Naive thymus-derived CD4-positive, alpha-beta T cell (primary cell): ENCODE measurements at regions of chr10 and their contacts with region 1.

Region 1: DNA sequence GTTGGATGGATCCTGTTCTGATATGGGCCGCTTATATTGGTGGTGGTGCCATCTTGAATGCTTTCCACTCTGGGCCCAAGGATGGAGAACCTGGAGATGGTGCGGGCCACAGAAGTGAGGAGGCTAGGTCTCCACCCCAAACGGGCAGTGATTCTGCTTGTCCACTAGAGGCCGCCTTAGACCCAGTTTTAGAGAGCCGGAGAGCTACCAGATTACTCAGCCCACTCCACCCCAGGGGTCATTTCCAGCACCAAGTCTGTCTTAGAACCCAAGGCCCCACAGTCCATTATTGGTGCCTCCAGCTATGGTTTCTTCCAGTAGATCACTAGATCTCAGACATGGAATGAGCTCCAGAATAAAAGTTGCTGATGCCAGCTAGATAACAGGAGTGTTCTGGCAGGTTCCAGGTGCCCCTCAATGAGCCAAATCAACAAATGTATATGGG is 11.8 kb upstream of the CAMK2G start:
- DNase-seq: peak; percentile 44 to 74 (median 69)
- ATAC-seq: peak; percentile 93
- H3K4me3 ChIP-seq: no peak overlapping the region
- H3K4me3 Mint-ChIP-seq: no peak overlapping the region
- H3K27ac ChIP-seq: no peak overlapping the region
- H3K27ac Mint-ChIP-seq: peak overlapping the region in 3 of 9 donors; percentile 39 to 60 (median 41)
- H3K4me1 ChIP-seq: no peaks in the 10 kb centered on the region
- H3K4me1 Mint-ChIP-seq: peaks cover 0 to 21% (median 0%) of the 10 kb centered on the region in 7 donors
- H3K27me3 ChIP-seq: no peaks in the 10 kb centered on the region
- H3K27me3 Mint-ChIP-seq: peaks cover 0 to 2% (median 0%) of the 10 kb centered on the region in 5 donors

Region 2: GRCh38 chr10:73848821-73849489 is 37.2 kb before region 1 on chr10:
- CTCF ChIA-PET with region 1: interaction called, 288 read pairs
- POLR2A ChIA-PET with region 1: interaction called, 327 read pairs
- intact Hi-C with region 1: no loop called
- DNase-seq: peak; percentile 82 to 93 (median 88)
- ATAC-seq: peak; percentile 100
- H3K4me3 ChIP-seq: no peak overlapping the region
- H3K4me3 Mint-ChIP-seq: peak overlapping the region in 5 of 10 donors; percentile 1 to 58 (median 37)
- H3K27ac ChIP-seq: peak overlapping the region; percentile 56
- H3K27ac Mint-ChIP-seq: peak overlapping the region; percentile 75 to 97 (median 94)
- H3K4me1 ChIP-seq: peaks cover 6 to 7% of the 10 kb centered on the region in 2 donors
- H3K4me1 Mint-ChIP-seq: peaks cover 11 to 23% (median 16%) of the 10 kb centered on the region in 7 donors
- H3K27me3 ChIP-seq: no peaks in the 10 kb centered on the region
- H3K27me3 Mint-ChIP-seq: no peaks in the 10 kb centered on the region

Region 3: GRCh38 chr10:73931767-73932619 is 45.9 kb after region 1 on chr10:
- CTCF ChIA-PET with region 1: interaction called, 301 read pairs
- POLR2A ChIA-PET with region 1: no interaction called
- intact Hi-C with region 1: no loop called
- DNase-seq: peak in 5 of 9 donors; percentile 10 to 55 (median 26)
- ATAC-seq: peak; percentile 75
- H3K4me3 ChIP-seq: no peak overlapping the region
- H3K4me3 Mint-ChIP-seq: peak overlapping the region in 1 of 10 donors; percentile 45
- H3K27ac ChIP-seq: no peak overlapping the region
- H3K27ac Mint-ChIP-seq: peak overlapping the region in 1 of 9 donors; percentile 85
- H3K4me1 ChIP-seq: no peaks in the 10 kb centered on the region
- H3K4me1 Mint-ChIP-seq: peaks cover 6 to 22% (median 11%) of the 10 kb centered on the region in 7 donors
- H3K27me3 ChIP-seq: no peaks in the 10 kb centered on the region
- H3K27me3 Mint-ChIP-seq: peaks cover 10 to 20% (median 14%) of the 10 kb centered on the region in 5 donors

Region 4: DNA sequence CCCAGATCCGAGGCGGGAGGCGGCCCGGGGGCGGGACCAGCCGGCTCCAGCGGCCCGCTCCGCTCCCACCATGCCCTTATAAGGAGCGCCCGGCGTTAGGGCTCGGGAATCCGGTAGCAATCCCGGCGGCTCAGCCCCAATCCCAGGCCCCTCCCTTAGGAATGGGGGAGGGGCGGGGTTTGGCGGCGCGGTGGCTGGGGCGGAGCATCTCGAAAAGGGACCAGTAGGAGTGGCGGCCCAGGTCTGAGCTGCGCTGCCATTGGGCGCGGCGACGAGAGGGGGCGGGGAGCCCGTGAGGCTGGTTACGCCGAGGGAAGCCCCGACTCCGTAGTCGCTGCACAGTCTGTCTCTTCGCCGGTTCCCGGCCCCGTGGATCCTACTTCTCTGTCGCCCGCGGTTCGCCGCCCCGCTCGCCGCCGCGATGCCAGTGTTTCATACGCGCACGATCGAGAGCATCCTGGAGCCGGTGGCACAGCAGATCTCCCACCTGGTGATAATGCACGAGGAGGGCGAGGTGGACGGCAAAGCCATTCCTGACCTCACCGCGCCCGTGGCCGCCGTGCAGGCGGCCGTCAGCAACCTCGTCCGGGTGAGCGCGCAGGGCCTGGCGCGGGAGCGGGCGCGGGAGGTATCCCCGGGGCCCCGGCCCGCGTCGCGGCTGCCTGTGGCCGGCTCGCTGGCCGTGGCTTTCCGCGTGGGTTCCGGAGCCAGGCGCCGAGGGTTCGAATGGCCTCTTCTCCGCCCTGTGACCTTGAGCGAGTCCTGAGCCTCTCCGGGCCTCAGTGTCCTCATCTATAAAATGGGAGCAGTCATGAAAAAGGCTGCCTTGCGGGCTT is 111.9 kb after region 1 on chr10 and contains the start of gene VCL:
- CTCF ChIA-PET with region 1: no interaction called
- POLR2A ChIA-PET with region 1: no interaction called
- intact Hi-C with region 1: loop called in 1 of 2 experiments (anchors 2 kb)
- DNase-seq: peak; percentile 90 to 97 (median 95)
- ATAC-seq: peak; percentile 99
- H3K4me3 ChIP-seq: peak within 1 kb of the TSS; percentile 71
- H3K4me3 Mint-ChIP-seq: peak within 1 kb of the TSS; percentile 83 to 100 (median 97)
- H3K27ac ChIP-seq: peak within 1 kb of the TSS; percentile 91
- H3K27ac Mint-ChIP-seq: peak within 1 kb of the TSS; percentile 83 to 99 (median 98)
- H3K4me1 ChIP-seq: peaks cover 19 to 22% of the 10 kb centered on the region in 2 donors
- H3K4me1 Mint-ChIP-seq: peaks cover 43 to 53% (median 48%) of the 10 kb centered on the region in 7 donors
- H3K27me3 ChIP-seq: no peaks in the 10 kb centered on the region
- H3K27me3 Mint-ChIP-seq: no peaks in the 10 kb centered on the region
- total RNA-seq, gene VCL: 9.0 to 67.7 (median 21.6) TPM

Region 5: DNA sequence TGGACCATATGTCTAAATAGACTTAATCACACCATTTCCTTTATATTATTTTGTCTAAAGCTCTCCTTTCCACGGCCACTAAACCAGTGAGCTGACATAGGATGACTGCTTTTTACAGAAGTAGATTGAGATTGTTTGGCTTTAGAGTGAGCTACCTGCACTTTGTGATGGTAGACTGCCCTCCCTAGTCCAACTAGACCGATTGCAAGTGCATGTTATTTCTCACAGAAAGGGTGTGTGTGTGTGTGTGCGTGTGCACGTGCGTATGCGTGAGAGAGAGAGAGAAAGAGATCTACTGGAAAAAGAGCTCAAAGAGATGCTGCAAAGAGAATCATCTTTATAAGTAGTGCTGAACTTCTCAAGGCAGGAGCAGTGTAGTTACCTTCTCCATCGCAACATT is 172.6 kb after region 1 on chr10:
- CTCF ChIA-PET with region 1: interaction called, 11 read pairs
- POLR2A ChIA-PET with region 1: interaction called, 3 read pairs
- intact Hi-C with region 1: loop called (anchors 1 kb)
- DNase-seq: peak in 7 of 9 donors; percentile 12 to 60 (median 29)
- ATAC-seq: peak; percentile 70
- H3K4me3 ChIP-seq: no peak overlapping the region
- H3K4me3 Mint-ChIP-seq: peak overlapping the region in 7 of 10 donors; percentile 1 to 76 (median 8)
- H3K27ac ChIP-seq: no peak overlapping the region
- H3K27ac Mint-ChIP-seq: peak overlapping the region in 5 of 9 donors; percentile 4 to 52 (median 12)
- H3K4me1 ChIP-seq: peaks cover 10 to 15% of the 10 kb centered on the region in 2 donors
- H3K4me1 Mint-ChIP-seq: peaks cover 18 to 44% (median 26%) of the 10 kb centered on the region in 7 donors
- H3K27me3 ChIP-seq: no peaks in the 10 kb centered on the region
- H3K27me3 Mint-ChIP-seq: no peaks in the 10 kb centered on the region

Region 6: GRCh38 chr10:74103560-74104248 is 217.6 kb after region 1 on chr10:
- CTCF ChIA-PET with region 1: interaction called, 3 read pairs
- POLR2A ChIA-PET with region 1: no interaction called
- intact Hi-C with region 1: loop called (anchors 1 kb)
- DNase-seq: peak in 1 of 9 donors; percentile 4
- ATAC-seq: no peak
- H3K4me3 ChIP-seq: no peak overlapping the region
- H3K4me3 Mint-ChIP-seq: no peak overlapping the region
- H3K27ac ChIP-seq: no peak overlapping the region
- H3K27ac Mint-ChIP-seq: peak overlapping the region in 2 of 9 donors; percentile 28 to 65
- H3K4me1 ChIP-seq: no peaks in the 10 kb centered on the region
- H3K4me1 Mint-ChIP-seq: peaks cover 0 to 10% (median 0%) of the 10 kb centered on the region in 7 donors
- H3K27me3 ChIP-seq: no peaks in the 10 kb centered on the region
- H3K27me3 Mint-ChIP-seq: no peaks in the 10 kb centered on the region

Region 7: DNA sequence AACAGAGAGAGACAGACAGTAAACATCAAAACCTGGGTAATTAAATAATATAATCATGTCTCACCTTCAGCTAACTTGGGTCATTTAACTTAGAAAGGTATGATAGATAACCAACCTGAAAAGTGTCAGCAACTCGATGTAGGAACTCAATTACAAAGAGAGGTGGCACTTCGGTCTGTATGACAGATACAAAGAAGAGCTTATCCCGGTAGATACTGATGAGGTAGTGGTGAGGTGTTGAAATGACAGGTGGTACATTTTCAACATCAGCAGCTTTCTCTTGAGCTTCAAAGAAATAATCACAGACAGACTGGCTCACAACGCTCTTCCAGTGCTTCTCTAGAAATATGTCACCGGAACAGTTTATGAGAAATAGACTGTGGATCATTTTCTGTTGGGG is 251.9 kb after region 1 on chr10:
- CTCF ChIA-PET with region 1: no interaction called
- POLR2A ChIA-PET with region 1: no interaction called
- intact Hi-C with region 1: no loop called
- DNase-seq: peak in 1 of 9 donors; percentile 4
- ATAC-seq: no peak
- H3K4me3 ChIP-seq: no peak overlapping the region
- H3K4me3 Mint-ChIP-seq: no peak overlapping the region
- H3K27ac ChIP-seq: no peak overlapping the region
- H3K27ac Mint-ChIP-seq: no peak overlapping the region
- H3K4me1 ChIP-seq: no peaks in the 10 kb centered on the region
- H3K4me1 Mint-ChIP-seq: peaks cover 3 to 25% (median 8%) of the 10 kb centered on the region in 7 donors
- H3K27me3 ChIP-seq: no peaks in the 10 kb centered on the region
- H3K27me3 Mint-ChIP-seq: no peaks in the 10 kb centered on the region

Region 8: GRCh38 chr10:74787457-74787856 is 901.4 kb after region 1 on chr10:
- CTCF ChIA-PET with region 1: no interaction called
- POLR2A ChIA-PET with region 1: no interaction called
- intact Hi-C with region 1: no loop called
- DNase-seq: no peak
- ATAC-seq: no peak
- H3K4me3 ChIP-seq: no peak overlapping the region
- H3K4me3 Mint-ChIP-seq: no peak overlapping the region
- H3K27ac ChIP-seq: no peak overlapping the region
- H3K27ac Mint-ChIP-seq: peak overlapping the region in 1 of 9 donors; percentile 8
- H3K4me1 ChIP-seq: no peaks in the 10 kb centered on the region
- H3K4me1 Mint-ChIP-seq: peaks cover 0 to 2% (median 0%) of the 10 kb centered on the region in 7 donors
- H3K27me3 ChIP-seq: no peaks in the 10 kb centered on the region
- H3K27me3 Mint-ChIP-seq: no peaks in the 10 kb centered on the region